WTC11 (cell line): ENCODE measurements at regions of chr14 and their contacts with region 1.

Region 1: GRCh38 chr14:68788996-68789820 is 3.7 kb downstream of the ZFP36L1 start:
- DNase-seq: peak; percentile 80
- ATAC-seq: peak; percentile 27
- H3K4me3 Mint-ChIP-seq: peak overlapping the region; percentile 98
- H3K27ac Mint-ChIP-seq: peak overlapping the region; percentile 85
- H3K4me1 Mint-ChIP-seq: peaks cover 44% of the 10 kb centered on the region
- H3K27me3 Mint-ChIP-seq: no peaks in the 10 kb centered on the region; the same call in 1 of the 2 replicates
- CTCF ChIP-seq: no peak

Region 2: GRCh38 chr14:68708343-68708742 is 80.9 kb before region 1 on chr14:
- CTCF ChIA-PET with region 1: no interaction called
- POLR2A ChIA-PET with region 1: no interaction called
- DNase-seq: no peak
- ATAC-seq: no peak
- H3K4me3 Mint-ChIP-seq: no peak overlapping the region
- H3K27ac Mint-ChIP-seq: no peak overlapping the region
- H3K4me1 Mint-ChIP-seq: no peaks in the 10 kb centered on the region
- H3K27me3 Mint-ChIP-seq: no peaks in the 10 kb centered on the region; the same call in 1 of the 2 replicates
- CTCF ChIP-seq: no peak

Region 3: DNA sequence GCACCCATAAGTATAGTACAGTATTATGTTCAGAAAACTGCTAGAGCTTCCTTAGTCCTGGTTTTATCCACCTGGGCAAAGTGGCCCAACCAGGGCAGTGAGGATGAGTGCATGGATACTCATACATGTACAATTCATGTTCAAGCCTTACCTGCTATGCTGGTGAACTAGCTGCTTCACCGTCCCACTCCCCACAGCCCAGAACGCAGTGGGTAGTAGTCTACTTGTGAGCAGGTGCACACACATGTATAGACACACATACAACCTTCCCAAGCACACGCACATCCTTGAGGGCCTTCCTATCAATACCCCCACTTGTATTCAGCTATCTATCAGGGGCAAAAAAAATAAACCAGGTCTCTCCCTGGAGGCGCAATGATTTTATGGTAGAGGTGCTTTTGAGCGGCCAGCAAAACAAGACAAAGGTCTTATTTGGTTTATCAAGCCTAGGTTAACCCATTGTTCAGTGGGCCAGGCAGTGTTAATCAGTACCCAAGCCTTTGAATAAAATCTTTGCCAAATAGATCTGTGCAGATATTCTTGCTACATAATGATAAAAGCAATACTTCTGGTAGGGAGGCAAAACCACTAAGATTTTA is 66.1 kb before region 1 on chr14:
- CTCF ChIA-PET with region 1: no interaction called
- POLR2A ChIA-PET with region 1: no interaction called
- DNase-seq: no peak
- ATAC-seq: no peak
- H3K4me3 Mint-ChIP-seq: no peak overlapping the region
- H3K27ac Mint-ChIP-seq: no peak overlapping the region
- H3K4me1 Mint-ChIP-seq: peaks cover 12% of the 10 kb centered on the region
- H3K27me3 Mint-ChIP-seq: peaks cover 4% of the 10 kb centered on the region
- CTCF ChIP-seq: no peak

Region 4: GRCh38 chr14:68824517-68825347 is 35.5 kb after region 1 on chr14:
- CTCF ChIA-PET with region 1: interaction called, 16 read pairs
- POLR2A ChIA-PET with region 1: interaction called, 11 read pairs
- DNase-seq: peak; percentile 94
- ATAC-seq: peak; percentile 98
- H3K4me3 Mint-ChIP-seq: no peak overlapping the region
- H3K27ac Mint-ChIP-seq: no peak overlapping the region
- H3K4me1 Mint-ChIP-seq: peaks cover 11% of the 10 kb centered on the region
- H3K27me3 Mint-ChIP-seq: peaks cover 2% of the 10 kb centered on the region; the same call in 1 of the 2 replicates
- CTCF ChIP-seq: peak; percentile 65

Region 5: GRCh38 chr14:69079183-69079742 is 290.1 kb after region 1 on chr14:
- CTCF ChIA-PET with region 1: no interaction called
- POLR2A ChIA-PET with region 1: no interaction called
- DNase-seq: no peak
- ATAC-seq: no peak
- H3K4me3 Mint-ChIP-seq: no peak overlapping the region
- H3K27ac Mint-ChIP-seq: 0 out of 2 replicates have a peak overlapping the region, but pooled peaks have one; percentile 1
- H3K4me1 Mint-ChIP-seq: peaks cover 12% of the 10 kb centered on the region; the same call in 1 of the 2 replicates
- H3K27me3 Mint-ChIP-seq: no peaks in the 10 kb centered on the region
- CTCF ChIP-seq: no peak